ENCODE measurements at regions of chr21 and their contacts with region 1.

Region 1: GRCh38 chr21:35989138-35989735 is 71.1 kb downstream of the SETD4 start:
- DNase-seq: no peak
- H3K4me3 ChIP-seq: no peak overlapping the region
- H3K27ac ChIP-seq: peak overlapping the region; percentile 16 to 29
- H3K4me1 ChIP-seq: no peaks in the 10 kb centered on the region
- H3K27me3 ChIP-seq: no peaks in the 10 kb centered on the region
- CTCF ChIP-seq: no peak
- POLR2A ChIP-seq: no peak

Region 2: DNA sequence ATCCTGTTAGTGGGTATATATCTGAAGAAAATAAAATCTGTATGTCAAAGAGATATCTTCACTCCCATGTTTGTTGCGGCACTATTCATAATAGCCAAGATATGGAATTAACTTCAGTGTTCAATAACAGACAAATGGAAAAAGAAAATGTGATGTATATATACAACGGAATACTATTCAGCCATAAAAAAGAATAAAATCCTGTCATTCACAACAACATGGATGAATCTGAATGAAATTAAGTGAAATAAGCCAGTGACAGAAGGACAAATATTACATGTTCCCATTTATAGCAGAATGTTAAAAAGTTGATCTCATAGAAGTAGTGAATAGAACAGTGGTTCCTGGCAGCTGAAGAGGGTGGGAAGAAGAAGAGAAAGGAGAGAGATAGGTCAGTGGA is 701.0 kb before region 1 on chr21:
- intact Hi-C with region 1: loop called (anchors 5 kb)
- DNase-seq: no peak
- H3K4me3 ChIP-seq: no peak overlapping the region
- H3K27ac ChIP-seq: no peak overlapping the region
- H3K4me1 ChIP-seq: no peaks in the 10 kb centered on the region
- H3K27me3 ChIP-seq: no peaks in the 10 kb centered on the region
- CTCF ChIP-seq: no peak
- POLR2A ChIP-seq: no peak

Region 3: GRCh38 chr21:35974818-35975217 is 14.4 kb before region 1 on chr21:
- intact Hi-C with region 1: no loop called
- DNase-seq: no peak
- H3K4me3 ChIP-seq: no peak overlapping the region
- H3K27ac ChIP-seq: no peak overlapping the region
- H3K4me1 ChIP-seq: no peaks in the 10 kb centered on the region
- H3K27me3 ChIP-seq: no peaks in the 10 kb centered on the region
- CTCF ChIP-seq: no peak
- POLR2A ChIP-seq: no peak

Region 4: GRCh38 chr21:36183144-36183795 is 194.0 kb after region 1 on chr21:
- intact Hi-C with region 1: loop called (anchors 5 kb)
- DNase-seq: no peak
- H3K4me3 ChIP-seq: no peak overlapping the region
- H3K27ac ChIP-seq: no peak overlapping the region
- H3K4me1 ChIP-seq: no peaks in the 10 kb centered on the region
- H3K27me3 ChIP-seq: no peaks in the 10 kb centered on the region
- CTCF ChIP-seq: no peak
- POLR2A ChIP-seq: no peak